HEK293 (cell line): ENCODE measurements at regions of chr5 and their contacts with region 1.

Region 1: GRCh38 chr5:180291943-180292831 is at the start of gene MAPK9:
- H3K4me3 ChIP-seq: peak within 1 kb of the TSS; percentile 90
- H3K27ac ChIP-seq: peak within 1 kb of the TSS; percentile 89
- H3K4me1 ChIP-seq: 0 out of 2 replicates have a peak, but pooled peaks cover 3% of the 10 kb centered on the region
- CTCF ChIP-seq: no peak

Region 2: GRCh38 chr5:180142021-180142765 is 150.0 kb before region 1 on chr5:
- CTCF ChIA-PET with region 1: no interaction called
- POLR2A ChIA-PET with region 1: no interaction called
- H3K4me3 ChIP-seq: no peak overlapping the region
- H3K27ac ChIP-seq: no peak overlapping the region
- H3K4me1 ChIP-seq: no peaks in the 10 kb centered on the region
- CTCF ChIP-seq: no peak

Region 3: DNA sequence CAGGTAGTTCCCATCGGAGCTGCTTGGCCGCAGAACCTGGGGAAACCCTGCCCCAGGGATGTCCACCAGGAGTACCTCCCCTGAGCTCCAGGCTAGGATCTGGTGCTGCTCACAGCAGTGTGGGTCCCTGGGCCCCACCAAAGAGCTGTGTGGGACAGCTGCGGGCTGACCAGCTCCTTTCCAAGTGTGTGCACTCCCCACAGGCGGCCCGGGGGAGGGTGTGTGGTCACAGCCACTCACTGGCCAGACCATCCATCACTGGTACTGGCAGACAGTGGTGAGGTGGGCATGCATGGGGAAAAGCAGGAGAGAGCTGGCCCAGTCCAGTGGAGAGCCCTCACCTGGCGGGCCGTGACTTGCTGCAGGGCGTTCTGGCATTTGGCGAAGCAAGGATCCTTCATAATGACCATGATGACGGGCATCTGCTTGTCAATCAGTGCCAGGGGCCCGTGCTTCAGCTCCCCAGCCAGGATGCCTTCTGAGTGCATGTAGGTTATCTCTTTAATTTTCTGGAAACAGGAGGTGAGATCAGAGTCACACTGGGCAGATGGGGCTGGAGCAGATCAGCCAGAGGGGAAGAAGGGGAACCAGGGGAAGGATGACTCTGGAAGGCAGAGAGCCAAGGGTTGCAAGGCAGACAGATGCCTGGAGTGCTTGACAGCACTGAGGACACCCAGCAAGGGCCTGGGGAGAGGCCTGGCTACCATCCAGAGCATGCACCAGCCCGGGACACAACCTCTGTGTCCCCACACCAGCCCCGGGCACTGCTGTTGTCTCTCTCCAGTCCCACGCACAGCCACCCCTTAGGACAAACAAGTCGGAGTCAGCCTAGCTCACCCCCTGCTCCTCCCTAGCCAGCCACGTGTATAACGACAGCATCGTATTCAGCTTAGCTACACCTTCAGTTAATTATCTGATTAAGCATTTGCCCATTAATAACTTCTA is 12.5 kb after region 1 on chr5:
- CTCF ChIA-PET with region 1: interaction called, 12 read pairs
- POLR2A ChIA-PET with region 1: interaction called, 4 read pairs
- H3K4me3 ChIP-seq: no peak overlapping the region
- H3K27ac ChIP-seq: no peak overlapping the region
- H3K4me1 ChIP-seq: no peaks in the 10 kb centered on the region
- CTCF ChIP-seq: no peak

Region 4: GRCh38 chr5:180315762-180316212 is 23.6 kb after region 1 on chr5:
- CTCF ChIA-PET with region 1: interaction called, 45 read pairs
- POLR2A ChIA-PET with region 1: interaction called, 4 read pairs
- H3K4me3 ChIP-seq: no peak overlapping the region
- H3K27ac ChIP-seq: no peak overlapping the region
- H3K4me1 ChIP-seq: no peaks in the 10 kb centered on the region
- CTCF ChIP-seq: peak; percentile 55; the same call in 1 of the 2 replicates

Region 5: GRCh38 chr5:180366326-180366725 is 74.1 kb after region 1 on chr5:
- CTCF ChIA-PET with region 1: no interaction called
- POLR2A ChIA-PET with region 1: no interaction called
- H3K4me3 ChIP-seq: no peak overlapping the region
- H3K27ac ChIP-seq: no peak overlapping the region
- H3K4me1 ChIP-seq: no peaks in the 10 kb centered on the region
- CTCF ChIP-seq: no peak

Region 6: DNA sequence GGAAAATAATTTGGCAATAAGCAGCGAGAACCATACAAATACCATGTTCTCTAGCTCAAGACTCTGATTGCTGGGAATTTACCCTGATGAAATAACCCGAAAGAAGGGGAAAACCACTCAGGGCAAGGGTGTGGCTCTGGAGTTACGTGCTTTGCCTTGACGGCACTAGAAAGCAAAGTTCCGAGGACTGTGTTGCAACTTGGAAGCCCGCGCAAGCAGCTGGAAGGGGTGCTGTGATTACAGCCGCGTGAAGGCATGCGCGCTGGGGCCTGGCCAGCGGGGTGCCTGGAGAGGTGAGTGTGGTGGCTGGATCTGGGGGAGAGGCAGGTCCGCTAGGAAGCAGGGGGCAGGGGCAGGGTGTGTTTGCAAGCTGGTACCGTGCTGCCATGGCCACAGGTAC is 149.4 kb after region 1 on chr5:
- CTCF ChIA-PET with region 1: no interaction called
- POLR2A ChIA-PET with region 1: no interaction called
- H3K4me3 ChIP-seq: no peak overlapping the region
- H3K27ac ChIP-seq: no peak overlapping the region
- H3K4me1 ChIP-seq: no peaks in the 10 kb centered on the region
- CTCF ChIP-seq: no peak

Region 7: DNA sequence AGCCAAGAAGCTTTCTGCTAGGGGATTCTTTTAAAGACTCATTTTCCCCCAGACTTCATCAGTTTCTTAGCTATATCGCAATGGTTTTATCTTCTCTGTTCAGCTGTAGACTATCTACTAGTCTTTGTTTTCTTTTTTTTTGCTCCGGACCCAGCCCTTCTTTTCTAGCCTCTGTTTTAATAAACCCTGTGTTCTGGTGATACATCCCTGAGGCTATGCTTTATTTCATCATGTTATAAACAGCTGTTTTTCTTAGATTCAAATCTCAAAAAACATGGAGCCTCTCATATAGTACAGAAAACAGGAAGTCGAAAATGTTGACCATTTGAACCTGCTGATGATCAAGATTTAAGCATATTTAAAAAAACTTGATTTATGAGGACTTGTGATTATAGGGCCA is 261.3 kb after region 1 on chr5:
- CTCF ChIA-PET with region 1: no interaction called
- POLR2A ChIA-PET with region 1: no interaction called
- H3K4me3 ChIP-seq: no peak overlapping the region
- H3K27ac ChIP-seq: no peak overlapping the region
- H3K4me1 ChIP-seq: no peaks in the 10 kb centered on the region
- CTCF ChIP-seq: no peak